Activated T-helper 2 cell treated with anti-CD3 and anti-CD28 coated beads, Interferon-gamma antibody, Interleukin-2, Interleukin-4, amounts not matched to agents 10 μg/mL and 5 μg/mL and 100 μg/mL, durations not matched to agents 14 hours and 24 hours and 36 hours (primary cell): ENCODE measurements at regions of chr5 and their contacts with region 1.

Region 1: GRCh38 chr5:142324871-142325724 is at the start of gene SPRY4:
- DNase-seq: peak; percentile 78
- H3K4me3 Mint-ChIP-seq: peak within 1 kb of the TSS; percentile 83
- H3K27ac Mint-ChIP-seq: peak within 1 kb of the TSS; percentile 55
- H3K4me1 Mint-ChIP-seq: peaks cover 31% of the 10 kb centered on the region
- H3K27me3 Mint-ChIP-seq: peaks cover 40% of the 10 kb centered on the region
- total RNA-seq, gene SPRY4: 0.64 TPM in 2 replicates

Region 2: GRCh38 chr5:142356716-142357473 is 31.8 kb after region 1 on chr5:
- intact Hi-C with region 1: loop called (anchors 1 kb)
- DNase-seq: peak; percentile 87
- H3K4me3 Mint-ChIP-seq: peak overlapping the region; percentile 73
- H3K27ac Mint-ChIP-seq: peak overlapping the region; percentile 90
- H3K4me1 Mint-ChIP-seq: peaks cover 34% of the 10 kb centered on the region
- H3K27me3 Mint-ChIP-seq: peaks cover 9% of the 10 kb centered on the region

Region 3: GRCh38 chr5:142432369-142432863 is 107.3 kb after region 1 on chr5:
- intact Hi-C with region 1: loop called (anchors 2 kb)
- DNase-seq: peak; percentile 23
- H3K4me3 Mint-ChIP-seq: peak overlapping the region; percentile 7
- H3K27ac Mint-ChIP-seq: peak overlapping the region; percentile 80
- H3K4me1 Mint-ChIP-seq: peaks cover 29% of the 10 kb centered on the region
- H3K27me3 Mint-ChIP-seq: no peaks in the 10 kb centered on the region

Region 4: GRCh38 chr5:142881076-142881783 is 556.1 kb after region 1 on chr5:
- intact Hi-C with region 1: no loop called
- DNase-seq: no peak
- H3K4me3 Mint-ChIP-seq: no peak overlapping the region
- H3K27ac Mint-ChIP-seq: no peak overlapping the region
- H3K4me1 Mint-ChIP-seq: peaks cover 13% of the 10 kb centered on the region
- H3K27me3 Mint-ChIP-seq: no peaks in the 10 kb centered on the region